IMR-90 (cell line): ENCODE measurements at regions of chr6 and their contacts with region 1.

Region 1: GRCh38 chr6:105077596-105078385 is 102.0 kb downstream of the POPDC3 start:
- DNase-seq: peak; percentile 64
- ATAC-seq: peak; percentile 74; the same call in 1 of the 2 replicates
- H3K4me3 ChIP-seq: no peak overlapping the region
- H3K27ac ChIP-seq: no peak overlapping the region
- H3K4me1 ChIP-seq: no peaks in the 10 kb centered on the region
- H3K27me3 ChIP-seq: peaks cover 7% of the 10 kb centered on the region
- CTCF ChIP-seq: peak; percentile 63
- POLR2A ChIP-seq: no peak
- RAD21 ChIP-seq: peak; percentile 63

Region 2: DNA sequence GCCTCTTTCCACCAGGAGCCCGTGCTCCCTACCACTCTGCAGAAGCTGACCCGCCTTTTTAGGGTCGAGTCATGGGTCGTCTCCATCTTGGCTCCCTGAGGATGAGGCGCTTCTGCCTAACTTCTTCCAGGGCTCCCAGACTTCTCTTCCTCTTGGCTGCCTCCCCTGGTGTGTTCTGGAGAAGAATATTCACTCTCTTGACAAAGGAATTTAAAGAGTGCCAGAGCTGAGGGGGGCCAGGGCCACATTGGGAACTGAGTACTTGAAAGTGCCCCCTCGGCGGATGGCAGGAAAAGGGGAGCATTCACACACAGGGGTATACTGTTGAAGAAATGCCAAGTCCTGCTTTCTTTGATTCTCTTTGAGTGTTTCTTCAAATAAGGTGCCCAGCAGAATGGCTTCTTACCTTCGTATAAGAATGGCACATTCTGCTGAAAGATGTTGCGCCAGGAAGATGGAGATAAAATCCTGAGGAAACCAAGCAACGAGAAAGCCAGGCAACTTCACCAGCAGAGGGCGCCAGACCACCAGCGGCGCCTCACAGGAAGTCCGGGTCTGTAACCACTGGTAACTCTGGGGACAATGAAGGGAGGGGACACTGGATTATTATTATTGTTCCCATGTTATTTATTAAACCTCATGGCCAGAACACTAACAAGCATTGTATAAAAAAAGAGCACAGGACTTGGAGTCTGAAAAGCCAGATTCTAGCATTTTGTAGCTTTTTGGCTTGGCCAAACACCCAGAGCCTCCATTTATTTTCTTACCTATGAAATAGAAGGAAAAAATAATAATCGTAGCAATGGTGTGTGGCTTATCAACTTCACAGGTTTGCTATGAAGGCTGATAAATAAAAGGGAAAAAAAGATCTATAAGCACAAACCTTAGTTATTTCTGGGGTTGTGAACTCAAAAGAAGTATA is 394.8 kb before region 1 on chr6:
- CTCF ChIA-PET with region 1: no interaction called
- POLR2A ChIA-PET with region 1: no interaction called
- dilution Hi-C with region 1: no loop called
- in situ Hi-C with region 1: loop called (anchors 10 kb)
- intact Hi-C with region 1: loop called (anchors 5 kb)
- DNase-seq: peak; percentile 59
- ATAC-seq: peak; percentile 72
- H3K4me3 ChIP-seq: no peak overlapping the region
- H3K27ac ChIP-seq: no peak overlapping the region
- H3K4me1 ChIP-seq: peaks cover under 1% of the 10 kb centered on the region; the same call in 1 of the 2 replicates
- H3K27me3 ChIP-seq: no peaks in the 10 kb centered on the region
- CTCF ChIP-seq: peak; percentile 88
- POLR2A ChIP-seq: no peak
- RAD21 ChIP-seq: peak; percentile 81

Region 3: DNA sequence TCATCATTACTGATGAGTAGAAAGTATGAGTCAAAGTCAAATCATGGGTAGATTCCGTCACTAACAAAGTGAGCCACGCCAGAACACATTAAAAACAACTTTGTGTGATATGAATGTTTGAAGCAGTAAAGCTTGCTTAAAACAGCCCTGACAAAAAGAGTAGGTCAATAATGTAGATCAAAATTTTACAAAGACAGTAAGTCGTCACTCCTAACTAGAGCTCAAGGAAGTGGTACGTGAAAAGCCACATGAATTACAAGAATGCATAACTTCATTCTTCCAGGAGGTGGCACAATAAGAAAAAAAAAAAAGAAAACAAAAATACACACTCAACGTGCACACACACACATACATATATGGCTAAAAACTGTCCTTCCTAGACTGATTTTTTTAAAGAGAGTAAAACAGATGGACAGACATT is 288.0 kb before region 1 on chr6:
- CTCF ChIA-PET with region 1: interaction called, 5 read pairs
- POLR2A ChIA-PET with region 1: no interaction called
- dilution Hi-C with region 1: no loop called
- in situ Hi-C with region 1: no loop called
- intact Hi-C with region 1: loop called (anchors 5 kb)
- DNase-seq: peak; percentile 55
- ATAC-seq: peak; percentile 79
- H3K4me3 ChIP-seq: no peak overlapping the region
- H3K27ac ChIP-seq: no peak overlapping the region
- H3K4me1 ChIP-seq: peaks cover 3% of the 10 kb centered on the region
- H3K27me3 ChIP-seq: no peaks in the 10 kb centered on the region
- CTCF ChIP-seq: peak; percentile 27
- POLR2A ChIP-seq: no peak
- RAD21 ChIP-seq: no peak

Region 4: GRCh38 chr6:104940881-104941728 is 136.7 kb before region 1 on chr6:
- CTCF ChIA-PET with region 1: no interaction called
- POLR2A ChIA-PET with region 1: no interaction called
- dilution Hi-C with region 1: no loop called
- in situ Hi-C with region 1: loop called (anchors 10 kb)
- intact Hi-C with region 1: loop called (anchors 1 kb)
- DNase-seq: peak; percentile 30
- ATAC-seq: peak; percentile 98
- H3K4me3 ChIP-seq: peak overlapping the region; percentile 28
- H3K27ac ChIP-seq: no peak overlapping the region
- H3K4me1 ChIP-seq: no peaks in the 10 kb centered on the region; the same call in 1 of the 2 replicates
- H3K27me3 ChIP-seq: peaks cover 17% of the 10 kb centered on the region
- CTCF ChIP-seq: peak; percentile 58
- POLR2A ChIP-seq: no peak
- RAD21 ChIP-seq: peak; percentile 46

Region 5: DNA sequence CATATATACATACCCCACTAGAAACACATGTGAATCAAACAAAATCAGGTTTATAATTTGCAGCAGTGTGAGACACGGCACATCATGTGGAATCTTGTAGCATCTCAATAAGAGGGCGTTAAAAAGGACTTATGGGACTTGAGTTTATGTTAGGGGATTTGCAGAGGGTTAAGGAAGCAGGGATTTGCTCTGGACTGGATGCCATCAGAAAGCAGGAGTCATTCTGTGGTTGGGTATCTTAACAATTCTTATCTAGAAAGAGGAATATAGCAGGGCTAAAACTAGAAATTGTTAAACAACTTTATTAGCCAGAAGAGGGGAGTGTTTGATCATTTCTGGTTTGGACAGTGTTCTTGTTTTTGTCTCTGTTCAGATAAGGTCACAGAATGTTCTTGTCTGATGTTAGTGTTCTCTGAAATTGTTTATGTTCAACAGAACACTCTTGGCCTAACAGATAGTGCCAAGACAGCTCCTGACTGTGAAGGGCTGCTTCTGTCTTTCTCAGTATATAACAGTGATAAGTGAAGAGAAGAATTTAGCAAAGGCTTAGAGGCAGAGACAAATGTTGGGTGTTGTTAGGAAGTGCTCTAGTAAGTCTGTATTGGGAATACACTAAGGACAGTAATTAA is 81.7 kb before region 1 on chr6:
- CTCF ChIA-PET with region 1: interaction called, 3 read pairs
- POLR2A ChIA-PET with region 1: no interaction called
- dilution Hi-C with region 1: no loop called
- in situ Hi-C with region 1: no loop called
- intact Hi-C with region 1: loop called (anchors 2 kb)
- DNase-seq: peak; percentile 19
- ATAC-seq: peak; percentile 64
- H3K4me3 ChIP-seq: no peak overlapping the region
- H3K27ac ChIP-seq: no peak overlapping the region
- H3K4me1 ChIP-seq: no peaks in the 10 kb centered on the region
- H3K27me3 ChIP-seq: no peaks in the 10 kb centered on the region; the same call in 1 of the 2 replicates
- CTCF ChIP-seq: peak; percentile 27
- POLR2A ChIP-seq: no peak
- RAD21 ChIP-seq: peak; percentile 12; the same call in 1 of the 2 replicates

Region 6: DNA sequence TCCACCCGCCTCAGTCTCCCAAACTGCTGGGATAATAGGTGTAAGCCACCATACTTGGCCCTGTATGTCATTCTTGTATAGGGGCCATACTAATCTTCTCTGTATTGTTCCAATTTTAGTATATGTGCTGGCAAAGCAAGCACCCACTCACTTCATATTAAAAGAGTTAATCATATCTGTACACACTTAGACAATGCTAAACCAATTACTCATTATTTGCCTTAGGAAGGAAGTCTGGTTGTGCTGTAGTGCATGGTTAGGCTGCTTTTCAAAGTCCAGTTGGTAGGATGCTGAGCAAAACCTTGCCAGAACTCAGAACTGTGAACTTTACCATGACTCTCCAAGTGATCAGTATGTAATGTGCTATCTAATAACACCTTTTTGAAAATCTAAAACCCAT is 32.3 kb before region 1 on chr6:
- CTCF ChIA-PET with region 1: no interaction called
- POLR2A ChIA-PET with region 1: no interaction called
- dilution Hi-C with region 1: no loop called
- in situ Hi-C with region 1: no loop called
- intact Hi-C with region 1: no loop called
- DNase-seq: peak; percentile 12
- ATAC-seq: no peak
- H3K4me3 ChIP-seq: no peak overlapping the region
- H3K27ac ChIP-seq: no peak overlapping the region
- H3K4me1 ChIP-seq: no peaks in the 10 kb centered on the region
- H3K27me3 ChIP-seq: no peaks in the 10 kb centered on the region
- CTCF ChIP-seq: no peak
- POLR2A ChIP-seq: no peak
- RAD21 ChIP-seq: no peak

Region 7: GRCh38 chr6:105179244-105180065 is 101.7 kb after region 1 on chr6 and contains the start of gene POPDC3:
- CTCF ChIA-PET with region 1: no interaction called
- POLR2A ChIA-PET with region 1: no interaction called
- dilution Hi-C with region 1: no loop called
- in situ Hi-C with region 1: no loop called
- intact Hi-C with region 1: no loop called
- DNase-seq: peak; percentile 53
- ATAC-seq: peak; percentile 71
- H3K4me3 ChIP-seq: peak within 1 kb of the TSS; percentile 63
- H3K27ac ChIP-seq: peak within 1 kb of the TSS; percentile 80
- H3K4me1 ChIP-seq: peaks cover 2% of the 10 kb centered on the region; the same call in 1 of the 2 replicates
- H3K27me3 ChIP-seq: no peaks in the 10 kb centered on the region
- CTCF ChIP-seq: no peak
- POLR2A ChIP-seq: peak; percentile 13; the same call in 1 of the 2 replicates
- RAD21 ChIP-seq: no peak
- total RNA-seq, gene POPDC3: 25.8 and 29.4 TPM in 2 replicates